ENCODE measurements at regions of chr6 and their contacts with region 1.

Region 1: GRCh38 chr6:31139599-31139998 is 733 bp upstream of the PSORS1C2 start:
- DNase-seq: no peak
- H3K4me3 ChIP-seq: no peak overlapping the region
- H3K27ac ChIP-seq: no peak overlapping the region
- H3K4me1 ChIP-seq: peaks cover 4 to 42% (median 7%) of the 10 kb centered on the region in 3 donors
- H3K27me3 ChIP-seq: no peaks in the 10 kb centered on the region
- CTCF ChIP-seq: no peak
- POLR2A ChIP-seq: no peak

Region 2: GRCh38 chr6:31193200-31193599 is 53.6 kb after region 1 on chr6:
- intact Hi-C with region 1: loop called (anchors 5 kb)
- DNase-seq: no peak
- H3K4me3 ChIP-seq: no peak overlapping the region
- H3K27ac ChIP-seq: no peak overlapping the region
- H3K4me1 ChIP-seq: peaks cover 0 to 13% (median 6%) of the 10 kb centered on the region in 3 donors
- H3K27me3 ChIP-seq: no peaks in the 10 kb centered on the region
- CTCF ChIP-seq: peak in 1 of 6 experiments; percentile 12
- POLR2A ChIP-seq: no peak

Region 3: DNA sequence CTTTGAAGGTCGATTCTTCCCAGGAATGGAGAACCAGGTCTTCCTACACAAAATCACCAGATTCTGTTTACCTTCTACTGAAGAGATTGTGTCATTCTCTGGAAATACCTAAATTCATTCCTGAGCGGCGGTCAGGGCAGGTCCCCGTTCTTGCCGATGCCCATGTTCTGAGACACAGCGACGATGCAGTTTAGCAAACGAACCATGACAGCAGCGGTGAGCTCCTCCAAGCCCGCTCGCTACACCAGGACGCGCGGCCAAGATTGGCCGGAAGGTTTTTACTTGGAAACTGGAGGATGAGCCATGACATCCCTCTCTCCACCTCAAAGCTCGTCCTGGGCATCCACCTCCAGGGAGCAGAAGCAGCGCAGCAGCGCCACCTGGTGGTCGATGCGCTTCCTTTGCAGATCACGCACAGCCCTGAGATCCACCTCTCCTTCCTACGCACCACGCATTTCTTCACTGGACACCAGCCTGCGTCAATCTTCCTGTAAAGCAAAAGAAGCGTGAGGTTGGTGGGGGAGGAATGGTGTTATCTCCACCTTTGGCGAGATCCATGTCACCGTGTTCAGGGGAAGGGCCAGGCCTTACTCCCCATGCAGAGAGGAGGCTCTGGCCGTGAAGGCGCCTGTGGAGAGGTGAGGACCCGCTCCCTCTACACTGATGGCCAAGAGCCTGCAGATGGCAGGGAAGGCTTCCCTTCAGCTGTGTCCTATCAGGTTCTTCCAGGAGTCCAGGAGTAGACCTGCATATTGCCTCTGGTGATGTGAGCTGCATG is 227.3 kb after region 1 on chr6:
- intact Hi-C with region 1: loop called (anchors 5 kb)
- DNase-seq: peak; percentile 44
- H3K4me3 ChIP-seq: peak overlapping the region in 3 of 4 donors; percentile 28 to 58 (median 34)
- H3K27ac ChIP-seq: no peak overlapping the region
- H3K4me1 ChIP-seq: peaks cover 0 to 9% (median 0%) of the 10 kb centered on the region in 3 donors
- H3K27me3 ChIP-seq: peaks cover 0 to 83% (median 0%) of the 10 kb centered on the region in 4 donors
- CTCF ChIP-seq: peak; percentile 86 to 98 (median 95)
- POLR2A ChIP-seq: no peak

Measured in esophagus squamous epithelium (tissue), 5 donors.